GM13976 (cell line): ENCODE measurements at regions of chr18 and their contacts with region 1.

Region 1: DNA sequence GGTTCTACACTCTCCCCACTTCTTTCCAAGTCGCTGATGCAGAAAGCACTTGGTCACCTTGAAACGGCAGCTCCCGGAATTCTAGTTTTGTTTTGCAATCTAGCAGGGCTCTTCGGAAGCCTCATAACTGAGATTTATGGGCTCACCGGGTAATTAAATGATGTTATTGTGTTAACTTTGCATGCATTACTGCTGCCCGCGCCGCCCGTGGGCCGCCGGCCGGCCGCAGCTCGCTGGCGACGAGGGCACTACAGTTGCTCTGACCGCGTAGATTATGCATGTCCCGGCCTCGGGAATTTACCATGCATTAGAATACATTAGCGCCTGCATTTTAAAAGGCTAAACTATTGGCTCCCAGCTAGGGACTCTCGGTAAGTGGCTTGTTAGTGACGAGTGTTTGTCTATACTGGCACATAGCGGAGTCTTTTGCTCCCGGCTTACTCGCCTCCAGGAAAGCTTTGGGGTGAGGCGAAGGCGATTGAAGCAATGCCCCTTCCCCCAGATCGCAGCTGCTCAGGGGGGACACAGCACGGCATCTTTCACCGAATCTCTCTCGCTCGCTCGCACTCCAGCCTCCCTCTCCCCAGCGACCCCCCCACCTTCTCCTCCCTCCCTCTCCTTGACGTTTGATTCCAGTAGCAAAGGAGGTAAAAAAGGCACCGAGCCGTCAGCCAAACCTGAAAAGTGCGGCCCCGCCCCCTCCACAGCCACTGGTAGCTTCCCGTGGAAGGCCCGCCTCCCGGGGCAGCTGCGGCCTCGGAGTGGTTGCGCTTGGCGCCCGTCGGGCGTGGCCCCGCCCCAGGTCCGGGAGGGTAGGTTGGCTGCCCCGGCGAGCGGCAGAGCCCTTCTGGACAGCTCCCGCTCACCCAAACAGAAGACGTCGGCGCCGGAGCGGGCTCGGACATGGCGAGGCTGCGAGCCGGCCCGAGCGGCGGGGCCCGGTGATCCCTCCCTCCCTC is at the start of gene ONECUT2:
- DNase-seq: peak; percentile 85
- CTCF ChIP-seq: no peak

Region 2: GRCh38 chr18:56869189-56869777 is 565.5 kb before region 1 on chr18:
- in situ Hi-C with region 1: loop called (anchors 25 kb)
- DNase-seq: peak; percentile 11
- CTCF ChIP-seq: peak; percentile 55

Region 3: GRCh38 chr18:57519671-57520424 is 85.0 kb after region 1 on chr18:
- in situ Hi-C with region 1: no loop called
- DNase-seq: no peak
- CTCF ChIP-seq: no peak